ENCODE measurements at regions of chr1 and their contacts with region 1.

Region 1: GRCh38 chr1:165397944-165398343 is 41.4 kb upstream of the LMX1A start:
- DNase-seq: peak; percentile 87
- H3K4me3 ChIP-seq: no peak overlapping the region
- H3K27ac ChIP-seq: peak overlapping the region; percentile 59
- H3K4me1 ChIP-seq: peaks cover 13% of the 10 kb centered on the region
- H3K27me3 ChIP-seq: no peaks in the 10 kb centered on the region
- CTCF ChIP-seq: no peak
- POLR2A ChIP-seq: no peak

Region 2: GRCh38 chr1:165419839-165420238 is 21.9 kb after region 1 on chr1:
- CTCF ChIA-PET with region 1: interaction called, 3 read pairs
- POLR2A ChIA-PET with region 1: no interaction called
- dilution Hi-C with region 1: no loop called
- intact Hi-C with region 1: loop called (anchors 2 kb)
- DNase-seq: no peak
- H3K4me3 ChIP-seq: no peak overlapping the region
- H3K27ac ChIP-seq: no peak overlapping the region
- H3K4me1 ChIP-seq: no peaks in the 10 kb centered on the region
- H3K27me3 ChIP-seq: peaks cover 1 to 4% of the 10 kb centered on the region in 2 experiments
- CTCF ChIP-seq: no peak
- POLR2A ChIP-seq: no peak